GM13977 (cell line): ENCODE measurements at regions of chr3 and their contacts with region 1.

Region 1: GRCh38 chr3:112519424-112520001 is 20.2 kb upstream of the BTLA start:
- DNase-seq: peak; percentile 55
- CTCF ChIP-seq: peak; percentile 66

Region 2: GRCh38 chr3:112111785-112112402 is 407.6 kb before region 1 on chr3:
- in situ Hi-C with region 1: loop called (anchors 5 kb)
- DNase-seq: peak; percentile 65
- CTCF ChIP-seq: peak; percentile 82

Region 3: DNA sequence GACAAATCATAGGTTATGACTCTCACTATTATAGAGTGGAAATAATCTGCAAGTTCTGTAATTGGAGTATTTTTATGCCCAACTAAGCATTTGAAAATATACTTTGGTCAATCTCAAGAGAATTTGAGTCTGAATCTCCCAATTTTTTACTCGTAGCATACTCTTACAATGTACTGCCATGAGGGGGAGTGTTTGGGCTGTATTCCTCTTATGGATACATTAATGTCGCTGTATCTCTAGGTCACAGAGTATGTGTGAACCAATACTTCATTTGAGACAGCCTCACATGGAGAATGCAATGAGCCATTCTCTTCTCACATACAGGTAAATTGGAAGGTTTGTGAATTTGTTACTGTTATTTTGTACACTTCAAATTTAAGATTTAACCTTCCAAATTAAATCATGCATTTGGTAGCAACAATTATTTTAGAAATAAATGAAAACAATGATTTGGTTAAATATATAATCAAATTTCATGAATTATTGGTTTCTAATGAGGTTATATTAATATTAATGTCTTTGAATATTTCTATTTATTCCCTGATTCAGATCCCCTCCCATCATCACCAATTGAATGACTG is 192.1 kb before region 1 on chr3:
- in situ Hi-C with region 1: loop called (anchors 10 kb)
- DNase-seq: peak; percentile 45
- CTCF ChIP-seq: peak; percentile 66

Region 4: GRCh38 chr3:112464264-112464663 is 55.2 kb before region 1 on chr3:
- in situ Hi-C with region 1: loop called (anchors 10 kb)
- DNase-seq: peak; percentile 21
- CTCF ChIP-seq: no peak

Region 5: GRCh38 chr3:113194823-113195401 is 675.4 kb after region 1 on chr3:
- in situ Hi-C with region 1: no loop called
- DNase-seq: no peak
- CTCF ChIP-seq: no peak